ENCODE measurements at regions of chr7 and their contacts with region 1.

Region 1: GRCh38 chr7:26200444-26201246 is at the start of gene HNRNPA2B1:
- DNase-seq: peak; percentile 93 to 98 (median 97)
- H3K4me3 ChIP-seq: peak within 1 kb of the TSS; percentile 72 to 100 (median 96)
- H3K27ac ChIP-seq: peak within 1 kb of the TSS; percentile 98 to 100 (median 100)
- H3K27me3 ChIP-seq: no peaks in the 10 kb centered on the region
- CTCF ChIP-seq: peak in 15 of 56 donors; percentile 2 to 40 (median 18)
- total RNA-seq, gene HNRNPA2B1: 303 to 523 (median 384) TPM

Region 2: GRCh38 chr7:25894902-25895791 is 305.5 kb before region 1 on chr7:
- intact Hi-C with region 1: loop called in 1 of 2 experiments (anchors 10 kb)
- DNase-seq: peak in 9 of 10 donors; percentile 49 to 81 (median 60)
- H3K4me3 ChIP-seq: peak overlapping the region in 56 of 59 donors; percentile 0 to 62 (median 41)
- H3K27ac ChIP-seq: peak overlapping the region in 1 of 59 donors; percentile 5
- H3K27me3 ChIP-seq: peaks cover 0 to 24% (median 0%) of the 10 kb centered on the region in 45 donors
- CTCF ChIP-seq: peak; percentile 32 to 80 (median 68)

Region 3: DNA sequence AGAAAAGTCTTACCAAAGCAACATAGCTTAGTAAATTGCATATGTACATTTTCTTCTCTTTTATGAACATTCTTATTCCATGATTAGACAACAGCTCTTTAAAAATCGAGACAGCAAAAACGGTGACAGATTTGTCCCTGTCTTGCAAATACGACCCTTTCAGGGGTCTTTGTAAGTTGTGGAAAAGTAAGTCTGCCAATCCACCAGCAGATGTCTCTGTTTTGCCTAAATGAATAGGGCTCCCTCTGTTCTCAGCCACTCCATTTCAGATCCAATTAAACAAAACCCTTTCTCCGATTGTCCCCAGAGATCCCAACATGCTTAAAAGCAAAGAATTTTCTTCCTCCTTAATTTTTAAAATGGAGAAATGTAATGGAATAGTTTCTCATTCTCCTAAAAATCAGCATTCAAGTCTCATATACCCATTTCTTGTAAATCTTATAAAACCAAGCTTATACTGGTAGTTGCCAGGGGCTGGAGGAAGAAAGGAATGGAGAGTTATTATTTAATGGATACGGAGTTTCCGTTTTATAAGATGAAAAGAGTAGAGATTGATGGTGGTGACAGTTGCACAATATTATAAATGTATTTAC is 109.6 kb before region 1 on chr7:
- intact Hi-C with region 1: loop called (anchors 2 to 5 kb)
- DNase-seq: peak in 1 of 10 donors; percentile 26
- H3K4me3 ChIP-seq: peak overlapping the region in 34 of 59 donors; percentile 0 to 48 (median 24)
- H3K27ac ChIP-seq: no peak overlapping the region
- H3K27me3 ChIP-seq: no peaks in the 10 kb centered on the region
- CTCF ChIP-seq: peak; percentile 53 to 93 (median 75)

Region 4: DNA sequence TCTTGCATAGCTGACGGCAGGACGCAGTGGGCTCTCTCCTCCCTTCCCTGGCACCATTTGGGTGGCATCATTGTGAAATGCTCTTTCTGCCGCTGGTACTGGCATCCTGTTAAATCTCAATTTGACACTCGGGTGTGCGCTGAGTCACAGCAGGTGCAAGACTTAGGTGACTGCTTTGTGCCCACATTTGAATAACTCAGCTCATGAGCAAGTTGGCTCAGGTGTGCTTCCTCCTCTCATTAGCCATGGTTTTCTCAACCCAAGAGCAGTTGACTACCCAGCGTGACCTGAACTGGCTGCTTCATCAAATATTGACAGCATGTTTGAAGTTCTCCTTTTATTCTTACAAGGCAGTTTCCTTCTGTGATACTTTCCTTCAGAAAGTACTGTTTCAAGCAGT is 73.2 kb before region 1 on chr7:
- intact Hi-C with region 1: no loop called
- DNase-seq: no peak
- H3K4me3 ChIP-seq: no peak overlapping the region
- H3K27ac ChIP-seq: no peak overlapping the region
- H3K27me3 ChIP-seq: peaks cover 0 to 18% (median 0%) of the 10 kb centered on the region in 45 donors
- CTCF ChIP-seq: no peak

Region 5: DNA sequence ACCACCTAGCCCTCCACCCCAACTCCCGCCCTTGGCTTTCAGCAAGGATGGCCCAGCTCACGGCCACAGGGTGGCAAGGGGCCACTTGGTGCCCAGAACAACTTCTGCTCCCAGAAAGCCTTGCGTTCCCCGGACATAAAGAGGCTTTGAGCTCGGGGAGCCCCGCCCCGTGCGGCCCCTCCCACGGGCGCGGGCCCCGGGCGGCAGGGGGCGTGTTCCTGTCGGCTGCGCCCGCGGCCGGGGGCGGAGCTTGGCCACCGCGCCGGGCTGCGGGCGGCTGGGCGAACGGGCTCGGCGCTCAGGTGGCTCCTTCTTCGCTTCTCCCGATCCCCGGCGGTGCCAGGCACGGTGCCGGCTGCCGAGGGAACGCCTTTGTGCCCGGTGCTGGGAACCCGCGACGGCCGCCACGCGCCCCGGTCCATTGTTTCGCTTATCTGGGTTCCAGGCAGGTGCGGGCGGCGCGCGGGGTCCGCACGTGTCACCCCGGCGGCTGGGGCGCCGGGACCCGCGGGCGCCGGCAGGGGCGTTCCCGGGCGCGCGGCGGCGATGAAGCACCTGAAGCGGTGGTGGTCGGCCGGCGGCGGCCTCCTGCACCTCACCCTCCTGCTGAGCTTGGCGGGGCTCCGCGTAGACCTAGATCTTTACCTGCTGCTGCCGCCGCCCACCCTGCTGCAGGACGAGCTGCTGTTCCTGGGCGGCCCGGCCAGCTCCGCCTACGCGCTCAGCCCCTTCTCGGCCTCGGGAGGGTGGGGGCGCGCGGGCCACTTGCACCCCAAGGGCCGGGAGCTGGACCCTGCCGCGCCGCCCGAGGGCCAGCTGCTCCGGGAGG is 48.5 kb before region 1 on chr7 and contains the start of gene NFE2L3:
- intact Hi-C with region 1: loop called in 1 of 2 experiments (anchors 1 kb)
- DNase-seq: peak; percentile 55 to 85 (median 72)
- H3K4me3 ChIP-seq: peak within 1 kb of the TSS in 58 of 59 donors; percentile 15 to 73 (median 55)
- H3K27ac ChIP-seq: peak within 1 kb of the TSS in 9 of 59 donors; percentile 4 to 75 (median 49)
- H3K27me3 ChIP-seq: peaks cover 0 to 53% (median 25%) of the 10 kb centered on the region in 45 donors
- CTCF ChIP-seq: peak in 48 of 56 donors; percentile 5 to 69 (median 33)
- total RNA-seq, gene NFE2L3: 0.15 to 5.3 (median 0.80) TPM in 115 of 120 experiments, not detected in the others

Region 6: DNA sequence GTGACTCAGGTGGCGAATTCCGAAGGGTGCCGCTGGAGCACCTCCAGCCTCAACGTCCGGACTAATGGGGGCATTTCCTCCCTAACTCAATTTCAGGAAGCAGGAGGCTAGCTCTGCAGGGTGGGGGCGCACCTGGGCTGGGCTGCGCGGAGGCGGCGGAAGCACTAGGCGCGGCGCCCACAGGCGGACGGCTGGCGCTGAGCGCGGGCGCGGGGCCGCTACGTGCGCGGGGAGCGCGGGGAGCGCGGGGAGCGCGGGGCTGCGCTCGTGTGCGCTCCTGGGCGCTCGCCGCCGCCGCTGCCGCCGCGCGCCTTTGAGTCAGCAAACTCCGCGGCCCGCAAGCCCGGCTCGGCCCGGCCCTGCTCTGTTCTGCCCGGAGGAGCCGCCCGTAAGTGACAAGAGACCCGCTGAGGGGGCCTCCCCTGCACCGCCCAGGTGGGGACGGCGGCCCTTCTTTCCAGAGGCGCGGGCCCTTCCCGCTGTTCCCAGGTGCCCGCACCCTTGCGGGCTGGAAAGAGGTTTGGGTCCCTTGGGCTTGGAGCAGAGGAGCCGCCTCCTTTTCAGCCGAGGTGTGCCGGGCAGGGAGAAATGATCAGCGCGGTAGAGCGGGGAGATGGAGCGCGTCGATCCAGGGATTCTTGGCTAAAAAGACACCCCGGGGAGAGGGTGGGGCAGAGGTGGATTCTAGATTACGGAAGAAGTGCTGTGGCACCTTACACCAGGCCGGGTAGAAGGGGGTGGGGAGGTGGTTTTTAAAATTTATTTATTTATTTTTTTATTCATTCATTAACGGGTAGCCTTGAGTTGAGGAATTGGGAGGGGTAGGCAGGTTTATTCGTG is 91.3 kb after region 1 on chr7 and contains the start of gene SNX10:
- intact Hi-C with region 1: loop called (anchors 2 to 10 kb)
- DNase-seq: peak in 8 of 10 donors; percentile 28 to 76 (median 53)
- H3K4me3 ChIP-seq: peak within 1 kb of the TSS; percentile 38 to 86 (median 70)
- H3K27ac ChIP-seq: peak within 1 kb of the TSS in 48 of 59 donors; percentile 1 to 86 (median 69)
- H3K27me3 ChIP-seq: peaks cover 0 to 4% (median 0%) of the 10 kb centered on the region in 45 donors
- CTCF ChIP-seq: peak in 22 of 56 donors; percentile 5 to 45 (median 25)
- total RNA-seq, gene SNX10: 12.4 to 140 (median 89.4) TPM

Region 7: GRCh38 chr7:26365077-26365900 is 164.6 kb after region 1 on chr7:
- intact Hi-C with region 1: loop called (anchors 5 to 10 kb)
- DNase-seq: peak in 4 of 10 donors; percentile 19 to 64 (median 56)
- H3K4me3 ChIP-seq: peak overlapping the region in 4 of 59 donors; percentile 5 to 24 (median 14)
- H3K27ac ChIP-seq: peak overlapping the region in 3 of 59 donors; percentile 4 to 10 (median 5)
- H3K27me3 ChIP-seq: peaks cover 0 to 27% (median 0%) of the 10 kb centered on the region in 45 donors
- CTCF ChIP-seq: peak; percentile 65 to 95 (median 85)

Region 8: GRCh38 chr7:26441002-26441521 is 240.4 kb after region 1 on chr7:
- intact Hi-C with region 1: no loop called
- DNase-seq: peak in 1 of 10 donors; percentile 11
- H3K4me3 ChIP-seq: no peak overlapping the region
- H3K27ac ChIP-seq: no peak overlapping the region
- H3K27me3 ChIP-seq: peaks cover 0 to 18% (median 0%) of the 10 kb centered on the region in 45 donors
- CTCF ChIP-seq: no peak

Measured in dorsolateral prefrontal cortex (tissue), 120 donors.